PC-9 (cell line): ENCODE measurements at regions of chr17 and their contacts with region 1.

Region 1: DNA sequence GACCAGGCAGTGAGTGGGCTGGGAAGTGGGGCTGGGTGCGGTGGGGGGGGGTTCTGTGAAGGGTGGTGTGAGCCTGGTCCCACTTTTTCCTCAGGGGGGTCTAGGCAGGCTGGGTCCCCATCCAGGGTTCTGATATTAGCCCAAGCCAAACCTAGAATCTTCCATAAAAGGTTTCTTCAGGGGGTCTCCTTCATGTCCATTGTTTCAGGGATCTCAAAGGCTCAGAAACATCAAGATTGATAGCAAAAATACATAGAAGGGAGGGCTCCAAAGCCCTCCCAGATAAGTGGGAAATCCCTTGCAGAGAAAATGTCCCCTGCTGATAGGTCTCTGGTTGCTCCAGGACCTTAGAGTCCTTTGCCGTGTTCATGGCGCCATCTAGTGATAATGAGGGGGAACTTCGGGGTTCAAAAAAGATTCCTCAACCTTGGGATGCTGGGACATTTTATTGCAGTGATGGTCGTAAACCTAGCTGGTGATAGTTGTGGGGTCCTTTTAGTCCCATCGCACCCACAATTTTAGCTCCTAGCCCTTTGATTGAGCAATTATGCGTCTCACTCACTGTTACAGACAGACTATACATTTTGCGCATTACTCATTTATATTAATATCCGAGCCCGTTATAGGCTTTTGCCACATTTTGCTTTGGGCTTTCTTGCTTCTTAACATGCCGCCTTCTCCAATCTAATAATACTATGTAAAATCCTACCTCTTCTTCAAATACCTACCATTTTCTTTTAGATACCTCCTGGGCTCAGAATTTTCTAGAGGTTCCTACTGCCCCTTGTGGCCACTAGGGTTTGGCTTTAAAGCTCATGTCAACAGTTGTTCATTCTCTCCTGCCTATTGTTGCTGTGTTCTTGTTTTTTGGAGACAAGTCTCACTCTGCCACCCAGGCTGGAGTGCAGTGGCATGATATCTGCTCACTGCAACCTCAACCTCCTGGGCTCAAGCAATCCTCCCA is 35.1 kb downstream of the IGF2BP1 start:
- DNase-seq: peak; percentile 58 to 70
- H3K4me3 ChIP-seq: no peak overlapping the region
- H3K27ac ChIP-seq: no peak overlapping the region
- H3K4me1 ChIP-seq: no peaks in the 10 kb centered on the region
- H3K27me3 ChIP-seq: no peaks in the 10 kb centered on the region
- CTCF ChIP-seq: peak; percentile 86

Region 2: DNA sequence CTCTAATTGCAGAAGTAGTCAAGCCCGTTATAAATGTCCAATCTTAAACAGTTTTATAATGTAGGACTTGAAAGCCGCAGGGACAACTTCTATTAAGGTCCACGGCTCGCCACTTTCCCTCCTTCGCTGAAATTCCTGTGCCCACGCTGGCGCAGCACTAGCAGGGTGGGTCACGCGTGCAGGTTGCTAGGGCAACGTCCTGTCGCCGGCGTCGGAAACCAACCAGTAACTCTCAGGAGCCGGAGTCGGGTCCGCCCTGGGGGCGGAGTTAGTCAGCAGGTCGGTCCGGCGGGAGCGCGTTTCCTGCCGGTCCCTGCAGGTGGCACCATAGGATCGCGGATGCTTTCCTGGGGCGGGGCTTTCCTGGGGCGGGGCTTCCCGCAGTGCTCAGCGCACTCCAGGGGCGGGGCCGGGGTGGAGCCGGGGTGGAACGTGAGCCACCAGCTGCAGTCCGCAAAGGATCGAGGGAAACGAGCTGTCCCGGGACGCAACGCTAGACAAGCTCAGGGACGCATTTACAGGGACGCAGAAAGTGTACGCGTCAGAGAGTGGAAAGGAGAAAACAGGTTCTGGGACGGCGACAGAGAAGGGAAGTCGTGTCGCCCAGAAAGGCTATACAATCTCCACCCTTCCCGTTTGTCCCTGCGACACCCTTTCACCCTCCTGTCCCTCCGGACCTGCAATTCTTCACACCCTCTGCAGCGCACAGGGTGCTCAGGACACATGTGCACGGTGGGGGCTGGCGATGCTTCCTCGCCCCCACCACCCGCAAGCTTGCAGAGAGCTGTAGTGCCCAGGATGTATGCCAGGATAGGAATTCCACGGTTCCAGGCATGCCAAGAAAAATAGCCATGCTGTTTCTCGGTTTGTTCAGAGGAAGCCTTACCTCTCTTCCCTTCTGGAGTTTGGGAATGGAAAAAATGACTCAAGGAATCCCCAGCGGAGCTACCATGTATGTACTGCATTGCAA is 1007.0 kb before region 1 on chr17:
- CTCF ChIA-PET with region 1: no interaction called
- POLR2A ChIA-PET with region 1: no interaction called
- intact Hi-C with region 1: loop called (anchors 10 kb)
- DNase-seq: peak; percentile 91 to 94
- H3K4me3 ChIP-seq: peak overlapping the region; percentile 68
- H3K27ac ChIP-seq: peak overlapping the region; percentile 84
- H3K4me1 ChIP-seq: peaks cover 27% of the 10 kb centered on the region
- H3K27me3 ChIP-seq: no peaks in the 10 kb centered on the region
- CTCF ChIP-seq: peak; percentile 87

Region 3: GRCh38 chr17:48678141-48678971 is 353.9 kb before region 1 on chr17:
- CTCF ChIA-PET with region 1: no interaction called
- POLR2A ChIA-PET with region 1: no interaction called
- intact Hi-C with region 1: loop called (anchors 10 kb)
- DNase-seq: peak; percentile 41 to 64
- H3K4me3 ChIP-seq: no peak overlapping the region; the same call in 1 of the 2 replicates
- H3K27ac ChIP-seq: no peak overlapping the region
- H3K4me1 ChIP-seq: 0 out of 2 replicates have a peak, but pooled peaks cover 4% of the 10 kb centered on the region
- H3K27me3 ChIP-seq: peaks cover 36% of the 10 kb centered on the region
- CTCF ChIP-seq: peak; percentile 97

Region 4: GRCh38 chr17:48804925-48805411 is 227.3 kb before region 1 on chr17:
- CTCF ChIA-PET with region 1: no interaction called
- POLR2A ChIA-PET with region 1: no interaction called
- intact Hi-C with region 1: loop called (anchors 1 kb)
- DNase-seq: peak in 1 of 2 experiments; percentile 57
- H3K4me3 ChIP-seq: no peak overlapping the region
- H3K27ac ChIP-seq: no peak overlapping the region
- H3K4me1 ChIP-seq: no peaks in the 10 kb centered on the region
- H3K27me3 ChIP-seq: peaks cover 16% of the 10 kb centered on the region
- CTCF ChIP-seq: peak; percentile 99

Region 5: GRCh38 chr17:48954300-48954755 is 77.9 kb before region 1 on chr17:
- CTCF ChIA-PET with region 1: interaction called, 3 read pairs
- POLR2A ChIA-PET with region 1: no interaction called
- intact Hi-C with region 1: loop called (anchors 1 kb)
- DNase-seq: peak; percentile 59 to 61
- H3K4me3 ChIP-seq: no peak overlapping the region
- H3K27ac ChIP-seq: no peak overlapping the region
- H3K4me1 ChIP-seq: peaks cover 5% of the 10 kb centered on the region
- H3K27me3 ChIP-seq: no peaks in the 10 kb centered on the region
- CTCF ChIP-seq: peak; percentile 84

Region 6: DNA sequence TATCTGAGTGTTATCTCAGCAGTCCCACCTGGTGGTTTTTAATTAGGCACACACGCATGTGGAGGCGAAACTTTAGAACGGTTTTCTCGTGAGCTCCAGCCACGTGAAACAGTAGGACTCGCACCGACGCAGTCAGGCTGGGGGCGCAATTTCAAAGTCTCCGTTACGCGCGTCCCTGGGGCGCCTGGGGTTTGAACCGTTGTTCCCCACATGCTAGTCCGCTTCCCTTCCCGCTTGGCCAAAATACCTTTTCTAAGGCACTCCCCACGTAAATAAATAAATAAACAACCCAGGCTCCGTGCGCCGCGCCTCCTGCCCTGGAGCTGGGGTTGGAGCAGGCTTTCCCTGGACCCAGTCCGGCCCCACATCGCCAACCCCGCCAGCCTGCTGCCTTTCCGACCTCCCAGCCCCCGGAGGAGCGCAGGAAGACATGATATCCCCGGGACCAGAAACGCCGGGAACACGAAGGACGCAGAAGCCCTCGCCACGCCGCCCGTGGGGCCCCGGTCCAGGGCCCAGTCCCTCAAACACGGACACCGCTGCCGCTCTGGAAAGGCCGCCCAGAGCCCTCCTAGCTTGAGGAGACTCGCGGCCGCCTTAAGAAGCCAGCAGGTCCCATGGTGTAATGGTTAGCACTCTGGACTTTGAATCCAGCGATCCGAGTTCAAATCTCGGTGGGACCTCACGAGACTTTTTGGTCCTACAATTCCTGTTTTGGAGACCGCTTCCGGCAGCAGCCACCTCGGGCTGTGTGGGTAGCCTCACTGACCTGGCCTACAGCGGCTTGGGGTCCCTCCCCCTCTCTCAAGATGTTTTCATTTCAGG is 159.9 kb after region 1 on chr17:
- CTCF ChIA-PET with region 1: no interaction called
- POLR2A ChIA-PET with region 1: no interaction called
- intact Hi-C with region 1: loop called (anchors 10 kb)
- DNase-seq: peak; percentile 82 to 91
- H3K4me3 ChIP-seq: peak overlapping the region; percentile 74
- H3K27ac ChIP-seq: peak overlapping the region; percentile 87
- H3K4me1 ChIP-seq: peaks cover 12% of the 10 kb centered on the region
- H3K27me3 ChIP-seq: no peaks in the 10 kb centered on the region
- CTCF ChIP-seq: peak; percentile 40; the same call in 1 of the 2 replicates

Region 7: GRCh38 chr17:49260011-49260921 is 228.0 kb after region 1 on chr17:
- CTCF ChIA-PET with region 1: no interaction called
- POLR2A ChIA-PET with region 1: interaction called, 31 read pairs
- intact Hi-C with region 1: no loop called
- DNase-seq: peak; percentile 42 to 62
- H3K4me3 ChIP-seq: peak overlapping the region; percentile 58
- H3K27ac ChIP-seq: no peak overlapping the region
- H3K4me1 ChIP-seq: 0 out of 2 replicates have a peak, but pooled peaks cover 3% of the 10 kb centered on the region
- H3K27me3 ChIP-seq: no peaks in the 10 kb centered on the region
- CTCF ChIP-seq: no peak